Endothelial cell of umbilical vein (primary cell): ENCODE measurements at regions of chr1 and their contacts with region 1.

Region 1: GRCh38 chr1:85484264-85484663 is 19.3 kb upstream of the DDAH1 start:
- DNase-seq: no peak
- H3K4me3 ChIP-seq: no peak overlapping the region
- H3K27ac ChIP-seq: no peak overlapping the region
- H3K4me1 ChIP-seq: peaks cover 4% of the 10 kb centered on the region
- H3K27me3 ChIP-seq: no peaks in the 10 kb centered on the region
- CTCF ChIP-seq: no peak
- POLR2A ChIP-seq: no peak

Region 2: GRCh38 chr1:85502625-85503083 is 18.4 kb after region 1 on chr1:
- CTCF ChIA-PET with region 1: interaction called, 18 read pairs
- POLR2A ChIA-PET with region 1: no interaction called
- dilution Hi-C with region 1: no loop called
- intact Hi-C with region 1: no loop called
- DNase-seq: peak; percentile 87
- H3K4me3 ChIP-seq: no peak overlapping the region
- H3K27ac ChIP-seq: no peak overlapping the region
- H3K4me1 ChIP-seq: no peaks in the 10 kb centered on the region
- H3K27me3 ChIP-seq: no peaks in the 10 kb centered on the region
- CTCF ChIP-seq: peak; percentile 46 to 58
- POLR2A ChIP-seq: no peak

Region 3: DNA sequence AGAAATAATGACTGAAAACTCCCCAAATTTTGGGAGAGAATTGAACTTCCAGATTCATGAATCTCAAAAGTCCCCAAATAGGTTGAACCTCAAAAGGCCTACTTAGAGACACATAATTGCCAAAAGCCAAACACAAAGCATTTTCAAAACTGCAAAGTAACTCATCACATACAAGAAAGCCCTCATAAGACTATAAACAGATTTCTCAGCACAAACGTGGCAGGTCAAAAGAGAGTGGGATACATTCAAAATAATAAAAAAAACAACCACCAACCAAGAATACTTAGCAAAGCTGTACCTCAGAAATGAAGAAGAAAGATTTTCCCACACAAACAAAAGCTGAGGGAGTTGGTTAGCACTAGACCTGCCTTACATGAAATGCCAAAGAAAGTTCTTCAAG is 154.1 kb after region 1 on chr1:
- CTCF ChIA-PET with region 1: no interaction called
- POLR2A ChIA-PET with region 1: no interaction called
- dilution Hi-C with region 1: no loop called
- intact Hi-C with region 1: no loop called
- DNase-seq: no peak
- H3K4me3 ChIP-seq: no peak overlapping the region
- H3K27ac ChIP-seq: no peak overlapping the region
- H3K4me1 ChIP-seq: no peaks in the 10 kb centered on the region
- H3K27me3 ChIP-seq: no peaks in the 10 kb centered on the region
- CTCF ChIP-seq: no peak
- POLR2A ChIP-seq: no peak